Caco-2 (cell line): ENCODE measurements at regions of chr6 and their contacts with region 1.

Region 1: DNA sequence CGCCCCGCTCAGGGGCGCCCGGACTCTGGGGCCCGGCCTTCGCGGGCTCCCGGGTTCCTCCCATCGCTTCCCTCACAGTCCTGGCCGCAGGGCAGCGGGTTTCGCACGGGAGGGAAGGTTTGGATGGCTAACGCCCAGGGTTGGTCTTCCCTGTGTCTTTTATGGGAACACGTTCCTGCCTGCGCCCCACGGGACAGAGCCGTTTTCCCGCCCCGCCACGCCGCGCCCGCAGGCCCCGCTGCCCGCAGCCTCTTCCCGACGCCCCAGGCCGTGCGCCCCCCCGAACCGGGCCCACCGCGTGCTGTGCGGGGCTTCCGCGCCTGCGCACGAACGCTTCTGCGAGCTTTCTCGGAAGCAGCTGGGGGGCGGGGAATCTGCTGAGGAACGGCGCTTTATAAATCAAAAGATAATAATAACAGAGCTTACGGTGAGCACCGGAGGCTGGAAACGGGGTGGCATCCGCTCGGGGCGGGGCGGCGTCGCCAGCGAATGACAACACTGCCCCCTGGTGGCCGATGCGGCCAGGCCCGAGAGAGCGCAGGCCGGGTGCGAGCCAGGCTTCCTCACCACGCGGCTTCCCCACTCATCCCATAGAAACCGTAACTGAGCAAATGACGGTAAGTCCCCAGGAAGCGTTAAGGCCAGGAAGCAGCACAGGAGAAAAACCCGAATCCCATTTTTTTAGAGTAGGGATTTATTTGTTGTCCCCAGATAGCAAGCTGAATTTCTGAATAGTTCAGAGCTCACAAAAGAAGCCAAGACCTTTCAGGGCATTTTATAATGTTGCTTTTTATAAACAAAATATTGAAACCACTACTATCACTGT is 116.4 kb downstream of the MYLK4 start:
- DNase-seq: peak; percentile 89 to 93
- H3K4me3 ChIP-seq: peak overlapping the region; percentile 45
- H3K4me3 Mint-ChIP-seq: peak overlapping the region; percentile 77
- H3K27ac Mint-ChIP-seq: peak overlapping the region; percentile 72
- H3K4me1 ChIP-seq: peaks cover 12% of the 10 kb centered on the region
- H3K4me1 Mint-ChIP-seq: no peaks in the 10 kb centered on the region
- H3K27me3 ChIP-seq: no peaks in the 10 kb centered on the region
- H3K27me3 Mint-ChIP-seq: no peaks in the 10 kb centered on the region
- CTCF ChIP-seq: peak; percentile 96

Region 2: GRCh38 chr6:1604158-1605030 is 1030.0 kb before region 1 on chr6:
- CTCF ChIA-PET with region 1: no interaction called
- POLR2A ChIA-PET with region 1: no interaction called
- intact Hi-C with region 1: loop called (anchors 2 kb)
- DNase-seq: peak; percentile 61 to 87
- H3K4me3 ChIP-seq: peak overlapping the region; percentile 46
- H3K4me3 Mint-ChIP-seq: peak overlapping the region; percentile 64
- H3K27ac Mint-ChIP-seq: no peak overlapping the region
- H3K4me1 ChIP-seq: no peaks in the 10 kb centered on the region
- H3K4me1 Mint-ChIP-seq: no peaks in the 10 kb centered on the region
- H3K27me3 ChIP-seq: no peaks in the 10 kb centered on the region
- H3K27me3 Mint-ChIP-seq: peaks cover 2% of the 10 kb centered on the region
- CTCF ChIP-seq: peak; percentile 78 to 96

Region 3: GRCh38 chr6:2353412-2354137 is 280.8 kb before region 1 on chr6:
- CTCF ChIA-PET with region 1: interaction called, 13 read pairs
- POLR2A ChIA-PET with region 1: no interaction called
- intact Hi-C with region 1: loop called (anchors 1 kb)
- DNase-seq: peak; percentile 61 to 75
- H3K4me3 ChIP-seq: no peak overlapping the region
- H3K4me3 Mint-ChIP-seq: no peak overlapping the region
- H3K27ac Mint-ChIP-seq: no peak overlapping the region
- H3K4me1 ChIP-seq: peaks cover 7% of the 10 kb centered on the region; the same call in 1 of the 2 replicates
- H3K4me1 Mint-ChIP-seq: peaks cover 8% of the 10 kb centered on the region
- H3K27me3 ChIP-seq: no peaks in the 10 kb centered on the region
- H3K27me3 Mint-ChIP-seq: no peaks in the 10 kb centered on the region
- CTCF ChIP-seq: peak; percentile 75 to 79

Region 4: GRCh38 chr6:2497922-2498623 is 136.3 kb before region 1 on chr6:
- CTCF ChIA-PET with region 1: no interaction called
- POLR2A ChIA-PET with region 1: no interaction called
- intact Hi-C with region 1: no loop called
- DNase-seq: no peak
- H3K4me3 ChIP-seq: no peak overlapping the region
- H3K4me3 Mint-ChIP-seq: no peak overlapping the region
- H3K27ac Mint-ChIP-seq: no peak overlapping the region
- H3K4me1 ChIP-seq: peaks cover 10% of the 10 kb centered on the region
- H3K4me1 Mint-ChIP-seq: peaks cover 10% of the 10 kb centered on the region
- H3K27me3 ChIP-seq: no peaks in the 10 kb centered on the region
- H3K27me3 Mint-ChIP-seq: no peaks in the 10 kb centered on the region
- CTCF ChIP-seq: no peak

Region 5: GRCh38 chr6:2514965-2515555 is 119.3 kb before region 1 on chr6:
- CTCF ChIA-PET with region 1: interaction called, 9 read pairs
- POLR2A ChIA-PET with region 1: interaction called, 8 read pairs
- intact Hi-C with region 1: loop called (anchors 1 kb)
- DNase-seq: peak; percentile 91 to 96
- H3K4me3 ChIP-seq: peak overlapping the region; percentile 13
- H3K4me3 Mint-ChIP-seq: peak overlapping the region; percentile 72
- H3K27ac Mint-ChIP-seq: peak overlapping the region; percentile 95
- H3K4me1 ChIP-seq: peaks cover 59% of the 10 kb centered on the region
- H3K4me1 Mint-ChIP-seq: peaks cover 26% of the 10 kb centered on the region
- H3K27me3 ChIP-seq: no peaks in the 10 kb centered on the region
- H3K27me3 Mint-ChIP-seq: no peaks in the 10 kb centered on the region
- CTCF ChIP-seq: no peak

Region 6: GRCh38 chr6:2793534-2794151 is 159.3 kb after region 1 on chr6:
- CTCF ChIA-PET with region 1: no interaction called
- POLR2A ChIA-PET with region 1: no interaction called
- intact Hi-C with region 1: no loop called
- DNase-seq: no peak
- H3K4me3 ChIP-seq: no peak overlapping the region
- H3K4me3 Mint-ChIP-seq: no peak overlapping the region
- H3K27ac Mint-ChIP-seq: no peak overlapping the region
- H3K4me1 ChIP-seq: peaks cover 16% of the 10 kb centered on the region
- H3K4me1 Mint-ChIP-seq: peaks cover 13% of the 10 kb centered on the region
- H3K27me3 ChIP-seq: no peaks in the 10 kb centered on the region
- H3K27me3 Mint-ChIP-seq: no peaks in the 10 kb centered on the region
- CTCF ChIP-seq: no peak